PC-3 (cell line): ENCODE measurements at regions of chr12 and their contacts with region 1.

Region 1: GRCh38 chr12:52870351-52871290 is 21.8 kb upstream of the KRT78 start:
- DNase-seq: peak; percentile 78
- ATAC-seq: peak; percentile 17
- H3K4me3 ChIP-seq: peak overlapping the region; percentile 8; the same call in 1 of the 2 replicates
- H3K27ac ChIP-seq: peak overlapping the region; percentile 97
- H3K4me1 ChIP-seq: peaks cover 51% of the 10 kb centered on the region
- H3K27me3 ChIP-seq: no peaks in the 10 kb centered on the region
- CTCF ChIP-seq: peak; percentile 96

Region 2: DNA sequence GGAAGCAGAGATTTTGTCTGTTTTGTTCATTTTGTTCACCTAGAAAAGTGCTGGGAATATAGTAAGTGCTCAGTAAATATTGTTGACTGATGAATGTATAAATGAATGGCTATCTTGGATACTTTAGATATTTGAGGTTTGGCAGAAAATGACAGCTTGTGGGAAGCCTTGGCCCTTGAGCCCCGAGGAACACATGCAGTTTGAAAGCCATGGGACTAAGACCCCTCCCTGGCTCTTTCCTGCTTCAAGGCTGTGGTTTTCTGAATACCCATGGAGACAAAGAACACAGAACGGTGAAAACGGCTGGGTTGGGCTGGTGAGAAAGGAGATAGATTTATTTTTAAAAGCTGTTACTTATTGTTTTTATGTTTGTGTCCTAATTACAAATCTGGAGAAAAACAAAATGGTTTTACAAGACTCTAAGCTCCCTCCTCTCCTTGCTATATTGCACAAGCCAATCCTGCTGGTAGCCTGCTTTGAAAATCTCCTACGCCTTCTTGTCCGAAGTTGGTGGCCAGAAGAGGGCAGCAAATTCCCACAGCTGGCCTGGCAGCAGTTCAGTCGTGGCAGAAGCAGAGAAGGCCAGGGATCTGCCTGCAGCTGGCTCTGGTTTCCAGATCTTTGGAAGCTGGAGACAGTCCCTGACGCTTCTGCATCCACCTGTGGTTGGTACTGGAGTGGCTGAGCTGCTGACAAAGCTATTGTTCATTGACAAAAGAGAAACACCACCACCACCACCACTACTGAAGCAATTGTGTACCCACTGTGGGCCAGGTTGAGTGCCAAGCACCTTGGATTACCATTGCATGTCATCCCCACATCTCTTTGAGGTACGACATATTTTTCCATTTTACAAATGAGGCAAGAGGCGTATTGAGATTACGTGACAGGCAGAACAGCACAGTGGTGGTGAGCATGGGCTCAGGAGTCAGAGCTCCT is 498.1 kb before region 1 on chr12:
- CTCF ChIA-PET with region 1: no interaction called
- POLR2A ChIA-PET with region 1: no interaction called
- intact Hi-C with region 1: loop called (anchors 5 kb)
- DNase-seq: peak; percentile 88
- ATAC-seq: peak; percentile 93
- H3K4me3 ChIP-seq: no peak overlapping the region
- H3K27ac ChIP-seq: no peak overlapping the region
- H3K4me1 ChIP-seq: no peaks in the 10 kb centered on the region
- H3K27me3 ChIP-seq: no peaks in the 10 kb centered on the region
- CTCF ChIP-seq: peak; percentile 87

Region 3: GRCh38 chr12:52442600-52443061 is 428.0 kb before region 1 on chr12:
- CTCF ChIA-PET with region 1: interaction called, 3 read pairs
- POLR2A ChIA-PET with region 1: interaction called, 3 read pairs
- intact Hi-C with region 1: loop called (anchors 5 kb)
- DNase-seq: peak; percentile 99
- ATAC-seq: peak; percentile 64
- H3K4me3 ChIP-seq: peak overlapping the region; percentile 11; the same call in 1 of the 2 replicates
- H3K27ac ChIP-seq: peak overlapping the region; percentile 95
- H3K4me1 ChIP-seq: peaks cover 72% of the 10 kb centered on the region
- H3K27me3 ChIP-seq: no peaks in the 10 kb centered on the region
- CTCF ChIP-seq: peak; percentile 56

Region 4: GRCh38 chr12:52495389-52495788 is 375.2 kb before region 1 on chr12:
- CTCF ChIA-PET with region 1: no interaction called
- POLR2A ChIA-PET with region 1: no interaction called
- intact Hi-C with region 1: no loop called
- DNase-seq: peak; percentile 75
- ATAC-seq: peak; percentile 48; the same call in 1 of the 2 replicates
- H3K4me3 ChIP-seq: no peak overlapping the region
- H3K27ac ChIP-seq: peak overlapping the region; percentile 86
- H3K4me1 ChIP-seq: peaks cover 49% of the 10 kb centered on the region
- H3K27me3 ChIP-seq: no peaks in the 10 kb centered on the region
- CTCF ChIP-seq: no peak

Region 5: GRCh38 chr12:52582971-52583456 is 287.6 kb before region 1 on chr12:
- CTCF ChIA-PET with region 1: interaction called, 8 read pairs
- POLR2A ChIA-PET with region 1: interaction called, 5 read pairs
- intact Hi-C with region 1: loop called (anchors 1 kb)
- DNase-seq: peak; percentile 78
- ATAC-seq: peak; percentile 77
- H3K4me3 ChIP-seq: no peak overlapping the region
- H3K27ac ChIP-seq: no peak overlapping the region
- H3K4me1 ChIP-seq: peaks cover 8% of the 10 kb centered on the region; the same call in 1 of the 2 replicates
- H3K27me3 ChIP-seq: no peaks in the 10 kb centered on the region
- CTCF ChIP-seq: peak; percentile 79

Region 6: GRCh38 chr12:52667511-52667910 is 203.1 kb before region 1 on chr12:
- CTCF ChIA-PET with region 1: interaction called, 24 read pairs
- POLR2A ChIA-PET with region 1: no interaction called
- intact Hi-C with region 1: loop called (anchors 2 kb)
- DNase-seq: peak; percentile 36
- ATAC-seq: no peak
- H3K4me3 ChIP-seq: no peak overlapping the region
- H3K27ac ChIP-seq: no peak overlapping the region
- H3K4me1 ChIP-seq: no peaks in the 10 kb centered on the region
- H3K27me3 ChIP-seq: peaks cover 30% of the 10 kb centered on the region
- CTCF ChIP-seq: peak; percentile 67

Region 7: GRCh38 chr12:52924764-52925716 is 54.4 kb after region 1 on chr12:
- CTCF ChIA-PET with region 1: no interaction called
- POLR2A ChIA-PET with region 1: no interaction called
- intact Hi-C with region 1: no loop called
- DNase-seq: peak; percentile 89
- ATAC-seq: peak; percentile 52
- H3K4me3 ChIP-seq: peak overlapping the region; percentile 47
- H3K27ac ChIP-seq: peak overlapping the region; percentile 98
- H3K4me1 ChIP-seq: peaks cover 38% of the 10 kb centered on the region
- H3K27me3 ChIP-seq: no peaks in the 10 kb centered on the region
- CTCF ChIP-seq: no peak